ENCODE measurements at regions of chr22 and their contacts with region 1.

Region 1: GRCh38 chr22:38201710-38202436 is at the start of gene MAFF:
- DNase-seq: peak; percentile 94
- H3K4me3 Mint-ChIP-seq: peak within 1 kb of the TSS; percentile 89
- H3K27ac Mint-ChIP-seq: peak within 1 kb of the TSS; percentile 98
- H3K4me1 Mint-ChIP-seq: peaks cover 58% of the 10 kb centered on the region
- H3K27me3 Mint-ChIP-seq: no peaks in the 10 kb centered on the region
- total RNA-seq, gene MAFF: 15.3 to 16.4 TPM

Region 2: DNA sequence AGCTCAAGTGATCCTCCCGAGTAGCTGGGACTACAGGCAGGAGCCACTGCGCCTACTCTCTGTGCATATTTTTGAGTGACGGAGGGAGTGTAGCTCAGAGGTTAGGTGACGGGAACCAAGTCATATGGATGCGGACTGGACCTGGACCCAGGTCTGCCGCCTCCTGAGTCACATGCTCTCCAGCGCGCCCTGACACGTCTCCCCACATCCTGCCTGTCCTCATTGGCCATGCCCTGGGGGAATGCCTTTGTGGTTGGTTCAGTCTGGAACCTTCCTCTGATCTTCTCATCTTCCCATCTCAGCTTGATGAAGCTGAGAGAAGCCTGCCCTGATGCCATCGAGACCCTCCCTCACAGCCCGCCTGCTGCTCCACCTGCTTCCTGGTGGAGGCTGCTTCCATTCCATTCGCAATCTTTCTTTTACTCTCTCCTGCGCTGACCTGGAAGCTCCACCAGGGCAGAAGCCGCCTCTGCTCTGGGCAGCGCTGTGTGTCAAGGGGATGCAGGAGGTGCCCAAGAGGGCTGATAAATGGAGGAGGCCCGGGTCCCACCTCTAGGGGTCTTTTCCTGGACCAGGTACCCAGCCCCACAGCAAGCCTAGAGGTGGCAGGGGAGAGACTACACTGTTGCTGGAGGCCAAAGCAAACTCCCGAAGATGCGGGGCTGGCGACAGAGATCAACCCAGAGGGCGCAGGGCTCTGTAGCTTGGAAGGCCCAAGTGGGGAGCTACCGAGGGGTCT is 77.5 kb before region 1 on chr22:
- CTCF ChIA-PET with region 1: no interaction called
- POLR2A ChIA-PET with region 1: no interaction called
- DNase-seq: no peak
- H3K4me3 Mint-ChIP-seq: no peak overlapping the region
- H3K27ac Mint-ChIP-seq: no peak overlapping the region
- H3K4me1 Mint-ChIP-seq: peaks cover 8% of the 10 kb centered on the region
- H3K27me3 Mint-ChIP-seq: no peaks in the 10 kb centered on the region

Region 3: DNA sequence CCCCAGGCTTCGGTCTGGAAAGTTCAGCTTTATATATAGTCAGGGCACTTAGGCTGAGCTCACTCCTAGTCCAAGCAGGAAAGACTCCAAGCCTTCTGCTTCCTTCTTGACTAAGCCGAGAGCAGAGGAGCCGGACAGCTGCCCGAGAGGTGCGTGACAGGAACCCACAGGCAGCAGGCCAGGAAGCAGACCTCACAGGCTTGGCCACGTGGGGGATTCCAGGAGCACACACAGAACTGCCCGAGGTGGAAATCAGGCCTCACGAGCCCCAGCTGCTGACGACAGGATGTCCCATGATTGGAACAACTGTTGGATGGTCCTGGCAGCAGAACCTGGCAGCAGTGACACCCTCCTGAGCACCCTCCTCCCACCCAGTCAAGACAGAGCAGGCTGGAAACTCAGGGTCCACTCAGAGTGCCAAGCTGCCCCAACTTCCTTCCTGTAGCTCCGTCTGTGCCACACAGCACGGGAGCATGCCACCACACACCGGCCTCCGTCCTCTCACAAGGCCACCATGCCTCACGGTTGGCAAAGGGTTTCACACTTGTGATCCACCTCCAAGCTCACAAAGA is 25.6 kb before region 1 on chr22:
- CTCF ChIA-PET with region 1: interaction called, 9 read pairs
- POLR2A ChIA-PET with region 1: interaction called, 93 read pairs
- DNase-seq: peak; percentile 62
- H3K4me3 Mint-ChIP-seq: peak overlapping the region; percentile 23
- H3K27ac Mint-ChIP-seq: peak overlapping the region; percentile 68
- H3K4me1 Mint-ChIP-seq: peaks cover 83% of the 10 kb centered on the region
- H3K27me3 Mint-ChIP-seq: no peaks in the 10 kb centered on the region

Region 4: DNA sequence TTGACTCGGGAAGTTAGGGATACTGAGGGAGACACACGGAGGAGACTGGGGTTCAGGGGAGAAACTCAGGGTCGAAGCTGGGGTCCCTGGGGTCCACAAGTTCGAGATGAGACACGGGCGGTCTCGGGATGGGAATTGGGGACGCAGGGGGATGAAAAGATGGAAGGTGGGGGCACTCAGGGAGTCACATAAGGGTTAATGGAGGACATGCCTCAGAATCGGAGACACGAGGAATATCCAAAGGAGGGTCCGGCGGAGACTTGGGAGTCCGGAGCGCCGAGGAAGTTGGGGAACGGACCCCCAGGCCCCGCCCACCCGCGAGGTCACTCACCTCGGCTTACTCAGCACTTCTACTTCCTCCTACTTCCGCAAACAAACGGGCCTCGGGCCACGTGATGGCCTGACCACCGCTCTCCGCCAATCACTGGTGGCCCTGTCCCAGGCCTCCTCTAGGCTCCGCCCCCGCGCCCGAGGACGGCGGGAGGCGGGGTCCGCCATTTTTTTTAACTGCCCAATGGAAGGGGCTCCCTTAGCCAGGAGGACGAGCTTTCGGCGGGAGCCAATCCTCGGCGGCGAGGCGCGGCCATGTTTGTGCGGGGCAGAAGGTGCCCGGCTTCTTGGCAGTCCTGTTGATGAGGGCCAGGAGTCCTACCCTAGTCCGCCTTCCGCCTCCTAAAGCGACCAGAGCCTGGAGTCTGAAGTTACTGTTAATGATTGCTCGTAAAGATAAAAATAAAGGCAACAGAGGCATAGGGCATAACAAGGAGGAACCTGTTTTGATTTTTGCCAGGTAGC is 20.2 kb before region 1 on chr22 and contains the start of gene PLA2G6:
- CTCF ChIA-PET with region 1: interaction called, 9 read pairs
- POLR2A ChIA-PET with region 1: interaction called, 93 read pairs
- DNase-seq: peak; percentile 99
- H3K4me3 Mint-ChIP-seq: peak within 1 kb of the TSS; percentile 98
- H3K27ac Mint-ChIP-seq: peak within 1 kb of the TSS; percentile 99
- H3K4me1 Mint-ChIP-seq: peaks cover 59% of the 10 kb centered on the region
- H3K27me3 Mint-ChIP-seq: peaks cover 8% of the 10 kb centered on the region
- total RNA-seq, gene PLA2G6: 80.7 to 85.7 TPM

Region 5: DNA sequence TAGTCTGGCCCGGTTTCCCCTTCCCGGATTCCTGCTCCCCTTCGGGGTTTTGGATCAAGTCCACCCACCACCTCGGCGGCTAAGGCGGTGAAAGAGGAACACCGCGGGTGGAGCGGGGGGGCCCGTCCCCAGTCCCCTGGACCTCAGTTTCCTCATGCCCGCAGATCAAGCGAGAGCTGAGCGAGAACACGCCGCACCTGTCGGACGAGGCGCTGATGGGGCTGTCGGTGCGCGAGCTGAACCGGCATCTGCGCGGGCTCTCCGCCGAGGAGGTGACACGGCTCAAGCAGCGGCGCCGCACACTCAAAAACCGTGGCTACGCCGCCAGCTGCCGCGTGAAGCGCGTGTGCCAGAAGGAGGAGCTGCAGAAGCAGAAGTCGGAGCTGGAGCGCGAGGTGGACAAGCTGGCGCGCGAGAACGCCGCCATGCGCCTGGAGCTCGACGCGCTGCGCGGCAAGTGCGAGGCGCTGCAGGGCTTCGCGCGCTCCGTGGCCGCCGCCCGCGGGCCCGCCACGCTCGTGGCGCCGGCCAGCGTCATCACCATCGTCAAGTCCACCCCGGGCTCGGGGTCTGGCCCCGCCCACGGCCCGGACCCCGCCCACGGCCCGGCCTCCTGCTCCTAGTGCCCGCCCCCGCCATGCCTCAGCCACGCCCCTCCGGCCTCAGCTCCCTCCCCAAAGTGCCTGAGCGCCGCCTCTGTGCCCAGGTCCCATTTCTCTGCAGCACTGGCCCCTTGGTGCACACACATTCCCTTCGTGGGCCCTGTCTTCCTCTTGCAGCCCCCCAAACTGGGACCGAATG is 12.6 kb after region 1 on chr22:
- CTCF ChIA-PET with region 1: interaction called, 7 read pairs
- POLR2A ChIA-PET with region 1: interaction called, 63 read pairs
- DNase-seq: peak; percentile 76
- H3K4me3 Mint-ChIP-seq: peak overlapping the region; percentile 13
- H3K27ac Mint-ChIP-seq: no peak overlapping the region
- H3K4me1 Mint-ChIP-seq: peaks cover 51% of the 10 kb centered on the region
- H3K27me3 Mint-ChIP-seq: no peaks in the 10 kb centered on the region

Region 6: GRCh38 chr22:38230108-38230825 is 28.4 kb after region 1 on chr22:
- CTCF ChIA-PET with region 1: interaction called, 16 read pairs
- POLR2A ChIA-PET with region 1: interaction called, 5 read pairs
- DNase-seq: peak; percentile 66
- H3K4me3 Mint-ChIP-seq: no peak overlapping the region
- H3K27ac Mint-ChIP-seq: peak overlapping the region; percentile 58
- H3K4me1 Mint-ChIP-seq: peaks cover 22% of the 10 kb centered on the region
- H3K27me3 Mint-ChIP-seq: no peaks in the 10 kb centered on the region